Heart left ventricle (tissue), 16 donors: ENCODE measurements at regions of chr4 and their contacts with region 1.

Region 1: GRCh38 chr4:185183619-185184281 is 20.1 kb downstream of the CFAP97 start:
- DNase-seq: peak; percentile 64 to 91 (median 85)
- ATAC-seq: peak in 3 of 4 donors; percentile 37 to 78 (median 77)
- H3K4me3 ChIP-seq: no peak overlapping the region
- H3K27ac ChIP-seq: no peak overlapping the region
- H3K4me1 ChIP-seq: peaks cover 0 to 5% (median 0%) of the 10 kb centered on the region in 12 donors
- H3K27me3 ChIP-seq: no peaks in the 10 kb centered on the region
- CTCF ChIP-seq: peak; percentile 73 to 96 (median 88)
- POLR2A ChIP-seq: no peak

Region 2: DNA sequence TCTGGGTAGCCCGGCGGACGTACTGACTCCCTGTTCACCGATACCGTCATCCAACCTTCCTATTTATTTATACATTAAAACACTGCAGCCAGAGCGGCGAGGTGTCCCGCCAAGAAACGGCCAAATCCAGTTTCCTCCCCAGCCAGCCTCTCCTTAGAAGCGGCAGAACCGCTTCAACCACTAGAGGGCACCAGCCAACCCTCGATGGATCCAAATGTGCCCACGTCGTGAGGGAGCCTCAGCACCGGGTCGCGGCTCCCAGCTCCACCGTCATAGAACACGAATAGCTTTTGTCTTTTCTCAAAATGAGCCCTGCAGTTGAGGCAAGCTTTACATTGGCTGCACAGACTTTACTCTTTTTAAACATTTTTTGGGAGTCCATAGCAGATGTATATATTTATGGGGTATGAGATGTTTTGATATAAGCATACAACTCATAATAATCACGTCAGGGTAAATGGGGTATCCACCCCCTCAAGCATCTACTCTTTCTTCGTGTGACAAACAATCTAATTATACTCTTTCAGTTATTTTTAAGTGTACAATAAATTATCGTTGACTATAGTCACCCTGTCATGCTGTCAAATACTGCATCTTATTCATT is 178.4 kb before region 1 on chr4:
- intact Hi-C with region 1: loop called in 3 of 10 experiments (anchors 1 to 5 kb)
- DNase-seq: peak; percentile 79 to 88 (median 85)
- ATAC-seq: peak; percentile 83 to 95 (median 94)
- H3K4me3 ChIP-seq: peak overlapping the region in 11 of 12 donors; percentile 5 to 42 (median 30)
- H3K27ac ChIP-seq: peak overlapping the region in 4 of 12 donors; percentile 1 to 42 (median 14)
- H3K4me1 ChIP-seq: peaks cover 0 to 12% (median 9%) of the 10 kb centered on the region in 12 donors
- H3K27me3 ChIP-seq: peaks cover 0 to 23% (median 0%) of the 10 kb centered on the region in 9 donors
- CTCF ChIP-seq: peak in 11 of 12 donors; percentile 84 to 96 (median 93)
- POLR2A ChIP-seq: no peak

Region 3: GRCh38 chr4:185134307-185134869 is 49.4 kb before region 1 on chr4:
- intact Hi-C with region 1: loop called in 2 of 10 experiments (anchors 5 to 10 kb)
- DNase-seq: no peak
- ATAC-seq: peak in 3 of 4 donors; percentile 39 to 47 (median 43)
- H3K4me3 ChIP-seq: no peak overlapping the region
- H3K27ac ChIP-seq: no peak overlapping the region
- H3K4me1 ChIP-seq: peaks cover 0 to 24% (median 9%) of the 10 kb centered on the region in 12 donors
- H3K27me3 ChIP-seq: no peaks in the 10 kb centered on the region
- CTCF ChIP-seq: peak; percentile 70 to 89 (median 80)
- POLR2A ChIP-seq: no peak

Region 4: DNA sequence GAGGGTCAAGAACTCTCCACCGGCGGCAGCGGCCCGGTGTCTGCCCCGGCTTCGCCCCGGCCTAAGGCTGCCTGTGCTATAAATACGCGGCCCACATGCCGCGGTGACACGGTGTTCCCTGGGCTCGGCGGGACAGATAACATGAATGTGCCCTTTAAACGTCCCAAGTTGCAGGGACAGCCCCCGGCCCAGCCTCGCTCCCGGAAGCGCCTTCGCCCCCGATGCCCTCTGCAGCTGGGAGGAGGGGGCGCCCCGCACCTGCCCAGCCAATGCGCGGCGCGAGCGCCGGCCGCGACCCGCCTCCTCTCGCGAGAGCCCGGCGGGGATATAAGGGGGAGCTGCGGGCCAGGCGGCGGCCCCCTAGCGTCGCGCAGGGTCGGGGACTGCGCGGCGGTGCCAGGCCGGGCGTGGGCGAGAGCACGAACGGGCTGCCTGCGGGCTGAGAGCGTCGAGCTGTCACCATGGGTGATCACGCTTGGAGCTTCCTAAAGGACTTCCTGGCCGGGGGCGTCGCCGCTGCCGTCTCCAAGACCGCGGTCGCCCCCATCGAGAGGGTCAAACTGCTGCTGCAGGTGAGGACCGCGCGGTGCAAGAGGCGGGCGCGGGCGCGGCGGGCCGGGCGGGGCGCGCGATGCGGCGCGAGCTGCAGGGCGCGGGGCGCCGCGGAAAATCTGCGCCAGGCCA is 40.7 kb before region 1 on chr4 and contains the start of gene SLC25A4:
- intact Hi-C with region 1: loop called in 4 of 10 experiments (anchors 5 to 10 kb)
- DNase-seq: peak; percentile 89 to 95 (median 94)
- ATAC-seq: peak; percentile 86 to 90 (median 88)
- H3K4me3 ChIP-seq: peak within 1 kb of the TSS; percentile 43 to 89 (median 74)
- H3K27ac ChIP-seq: peak within 1 kb of the TSS; percentile 77 to 97 (median 88)
- H3K4me1 ChIP-seq: peaks cover 0 to 68% (median 25%) of the 10 kb centered on the region in 12 donors
- H3K27me3 ChIP-seq: peaks cover 0 to 15% (median 0%) of the 10 kb centered on the region in 9 donors
- CTCF ChIP-seq: peak; percentile 23 to 69 (median 51)
- POLR2A ChIP-seq: peak; percentile 83 to 99
- total RNA-seq, gene SLC25A4: 878 to 2,214 (median 1,547) TPM

Region 5: DNA sequence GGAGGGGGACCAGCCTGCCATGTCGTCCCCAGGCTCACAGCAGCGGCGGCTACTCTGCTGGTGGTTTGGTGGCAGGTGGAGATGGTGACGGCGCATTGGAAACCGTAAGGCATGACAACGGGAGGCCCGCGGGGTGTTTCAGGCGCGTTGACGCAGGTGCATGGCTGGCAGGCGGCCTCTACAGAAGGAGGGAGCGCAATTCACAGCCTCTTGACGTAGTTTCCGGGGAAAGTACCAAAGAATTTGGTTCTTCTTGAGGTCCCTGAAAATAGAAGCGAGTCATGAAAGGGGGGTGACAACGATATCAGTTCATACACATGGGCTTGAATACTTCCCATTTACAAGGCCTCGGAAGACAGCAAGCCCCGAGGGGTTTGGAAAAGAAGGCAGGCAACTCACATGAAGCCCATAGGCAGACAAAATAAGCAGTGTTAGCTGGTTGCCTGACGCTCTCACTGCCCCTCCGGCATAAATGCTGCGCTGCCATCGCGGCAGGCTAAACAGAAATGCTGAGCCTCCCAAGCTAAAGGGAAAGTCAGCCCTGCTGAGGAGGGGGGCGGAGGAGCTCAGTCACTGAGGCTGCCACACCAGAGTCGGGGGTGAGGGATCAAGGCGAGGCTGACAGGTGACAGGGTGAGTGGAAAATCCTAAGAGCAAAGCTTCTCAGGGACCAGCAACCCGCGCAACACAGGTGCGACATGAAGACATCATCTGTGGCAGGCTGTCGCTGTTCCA is 403.8 kb after region 1 on chr4:
- intact Hi-C with region 1: no loop called
- DNase-seq: peak in 2 of 5 donors; percentile 31 to 84
- ATAC-seq: peak in 3 of 4 donors; percentile 36 to 64 (median 40)
- H3K4me3 ChIP-seq: peak overlapping the region in 1 of 12 donors; percentile 23
- H3K27ac ChIP-seq: peak overlapping the region in 8 of 12 donors; percentile 3 to 88 (median 42)
- H3K4me1 ChIP-seq: peaks cover 0 to 22% (median 5%) of the 10 kb centered on the region in 12 donors
- H3K27me3 ChIP-seq: peaks cover 0 to 9% (median 0%) of the 10 kb centered on the region in 9 donors
- CTCF ChIP-seq: no peak
- POLR2A ChIP-seq: no peak

Region 6: DNA sequence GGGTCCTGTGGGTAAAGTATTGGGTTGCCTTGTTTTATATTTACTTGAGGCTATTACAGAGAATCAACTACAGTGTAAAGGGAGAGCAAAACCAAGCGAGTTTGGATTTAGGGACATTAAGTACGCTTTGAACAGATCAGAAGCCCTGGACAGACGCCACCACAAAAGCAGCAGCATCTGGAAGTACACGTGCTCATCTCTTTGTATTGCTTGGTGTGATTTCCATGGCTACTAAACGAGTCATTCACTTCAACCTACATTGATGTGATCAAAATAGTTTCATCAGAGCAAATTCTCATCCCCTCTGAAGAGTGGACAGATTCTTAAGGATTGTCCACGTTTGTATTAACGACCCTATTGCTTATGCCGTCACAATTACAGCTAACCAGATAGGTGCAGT is 543.2 kb after region 1 on chr4:
- intact Hi-C with region 1: no loop called
- DNase-seq: no peak
- ATAC-seq: peak in 1 of 4 donors; percentile 2
- H3K4me3 ChIP-seq: no peak overlapping the region
- H3K27ac ChIP-seq: peak overlapping the region in 3 of 12 donors; percentile 8 to 86 (median 16)
- H3K4me1 ChIP-seq: peaks cover 2 to 90% (median 46%) of the 10 kb centered on the region in 12 donors
- H3K27me3 ChIP-seq: no peaks in the 10 kb centered on the region
- CTCF ChIP-seq: no peak
- POLR2A ChIP-seq: no peak